Ovary (tissue), 10 donors: ENCODE measurements at regions of chr18 and their contacts with region 1.

Region 1: GRCh38 chr18:30544141-30544540 is 498.4 kb downstream of the DSC3 start:
- DNase-seq: no peak
- H3K4me3 ChIP-seq: no peak overlapping the region
- H3K27ac ChIP-seq: no peak overlapping the region
- H3K4me1 ChIP-seq: no peaks in the 10 kb centered on the region
- H3K27me3 ChIP-seq: no peaks in the 10 kb centered on the region
- CTCF ChIP-seq: no peak
- EP300 ChIP-seq: no peak
- POLR2A ChIP-seq: no peak

Region 2: GRCh38 chr18:30192216-30192615 is 351.9 kb before region 1 on chr18:
- intact Hi-C with region 1: no loop called
- DNase-seq: no peak
- H3K4me3 ChIP-seq: no peak overlapping the region
- H3K27ac ChIP-seq: no peak overlapping the region
- H3K4me1 ChIP-seq: no peaks in the 10 kb centered on the region
- H3K27me3 ChIP-seq: no peaks in the 10 kb centered on the region
- CTCF ChIP-seq: no peak
- EP300 ChIP-seq: no peak
- POLR2A ChIP-seq: no peak

Region 3: GRCh38 chr18:30601541-30601940 is 57.4 kb after region 1 on chr18:
- intact Hi-C with region 1: loop called in 1 of 4 experiments (anchors 10 kb)
- DNase-seq: no peak
- H3K4me3 ChIP-seq: no peak overlapping the region
- H3K27ac ChIP-seq: no peak overlapping the region
- H3K4me1 ChIP-seq: no peaks in the 10 kb centered on the region
- H3K27me3 ChIP-seq: no peaks in the 10 kb centered on the region
- CTCF ChIP-seq: no peak
- EP300 ChIP-seq: no peak
- POLR2A ChIP-seq: no peak